K562 (cell line): ENCODE measurements at regions of chr15 and their contacts with region 1.

Region 1: GRCh38 chr15:52710050-52710707 is 31.0 kb upstream of the ATOSA start:
- DNase-seq: no peak
- ATAC-seq: no peak
- H3K4me3 ChIP-seq: no peak overlapping the region
- H3K27ac ChIP-seq: no peak overlapping the region
- H3K4me1 ChIP-seq: no peaks in the 10 kb centered on the region
- H3K27me3 ChIP-seq: no peaks in the 10 kb centered on the region; a peak in 1 of 5 replicates
- CTCF ChIP-seq: no peak
- EP300 ChIP-seq: no peak
- POLR2A ChIP-seq: no peak
- RAD21 ChIP-seq: no peak

Region 2: DNA sequence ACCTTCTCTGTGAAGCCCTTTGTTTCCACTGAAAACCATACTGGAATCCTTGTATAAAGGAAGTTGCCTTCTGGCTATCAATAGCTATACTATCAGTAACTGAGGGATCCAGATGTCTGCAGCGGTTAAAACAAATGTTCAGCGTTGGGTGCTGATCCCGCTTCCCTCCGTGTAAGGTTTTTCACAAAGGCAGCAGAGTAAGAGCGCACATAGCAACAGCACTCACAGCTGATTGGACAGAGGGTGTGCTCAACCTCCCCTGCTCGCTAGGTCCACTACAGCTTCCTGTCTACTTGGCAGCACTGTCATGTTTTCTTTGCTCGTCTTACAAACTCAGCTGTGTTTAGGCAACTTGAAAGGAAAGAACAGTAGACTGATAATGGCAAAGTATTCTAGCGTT is 58.3 kb before region 1 on chr15:
- CTCF ChIA-PET with region 1: no interaction called
- POLR2A ChIA-PET with region 1: no interaction called
- in situ Hi-C with region 1: no loop called
- intact Hi-C with region 1: loop called (anchors 10 kb)
- DNase-seq: peak; percentile 56 to 85 (median 77)
- ATAC-seq: peak; percentile 100
- H3K4me3 ChIP-seq: peak overlapping the region; percentile 25
- H3K27ac ChIP-seq: peak overlapping the region; percentile 68
- H3K4me1 ChIP-seq: peaks cover 0 to 15% of the 10 kb centered on the region in 2 experiments; a peak in 3 of 5 replicates
- H3K27me3 ChIP-seq: no peaks in the 10 kb centered on the region
- CTCF ChIP-seq: no peak; a peak in 1 of 6 replicates
- EP300 ChIP-seq: peak; percentile 18; the same call in 1 of the 2 replicates
- POLR2A ChIP-seq: peak; percentile 35; the same call in 1 of the 2 replicates
- RAD21 ChIP-seq: no peak

Region 3: DNA sequence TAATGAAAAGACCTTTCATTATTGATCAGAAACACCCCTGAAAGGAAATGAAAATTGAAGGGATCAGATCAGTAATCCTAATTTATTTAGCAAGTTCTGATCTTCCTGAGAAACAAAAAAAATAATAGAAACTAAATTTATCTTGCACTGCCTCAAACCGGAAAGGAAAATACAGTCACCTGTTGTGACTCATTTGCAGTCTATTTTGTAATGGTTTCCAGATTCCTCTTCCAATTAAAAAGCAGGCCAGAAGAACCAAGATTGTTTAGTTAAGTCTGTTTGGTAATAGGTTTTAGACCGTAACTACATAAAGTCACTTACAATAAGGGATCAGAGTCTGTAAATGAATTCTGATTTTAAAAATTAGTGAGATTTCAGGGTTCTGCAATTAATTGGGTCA is 18.7 kb after region 1 on chr15:
- CTCF ChIA-PET with region 1: no interaction called
- POLR2A ChIA-PET with region 1: no interaction called
- in situ Hi-C with region 1: no loop called
- intact Hi-C with region 1: no loop called
- DNase-seq: no peak
- ATAC-seq: no peak
- H3K4me3 ChIP-seq: no peak overlapping the region
- H3K27ac ChIP-seq: no peak overlapping the region
- H3K4me1 ChIP-seq: no peaks in the 10 kb centered on the region
- H3K27me3 ChIP-seq: peaks cover 0 to 4% of the 10 kb centered on the region in 2 experiments; a peak in 2 of 5 replicates
- CTCF ChIP-seq: no peak
- EP300 ChIP-seq: no peak
- POLR2A ChIP-seq: no peak
- RAD21 ChIP-seq: no peak